AG04449 (cell line): ENCODE measurements at regions of chr1 and their contacts with region 1.

Region 1: GRCh38 chr1:224458996-224459395 is 24.4 kb upstream of the WDR26 start:
- DNase-seq: no peak
- H3K4me3 ChIP-seq: no peak overlapping the region
- CTCF ChIP-seq: no peak

Region 2: GRCh38 chr1:224113918-224114786 is 344.8 kb before region 1 on chr1 and contains the start of gene FBXO28:
- CTCF ChIA-PET with region 1: interaction called, 48 read pairs
- POLR2A ChIA-PET with region 1: no interaction called
- DNase-seq: peak; percentile 61
- H3K4me3 ChIP-seq: peak within 1 kb of the TSS; percentile 84
- CTCF ChIP-seq: no peak

Region 3: GRCh38 chr1:224383218-224383617 is 75.8 kb before region 1 on chr1:
- CTCF ChIA-PET with region 1: interaction called, 11 read pairs
- POLR2A ChIA-PET with region 1: no interaction called
- DNase-seq: no peak
- H3K4me3 ChIP-seq: no peak overlapping the region
- CTCF ChIP-seq: no peak

Region 4: DNA sequence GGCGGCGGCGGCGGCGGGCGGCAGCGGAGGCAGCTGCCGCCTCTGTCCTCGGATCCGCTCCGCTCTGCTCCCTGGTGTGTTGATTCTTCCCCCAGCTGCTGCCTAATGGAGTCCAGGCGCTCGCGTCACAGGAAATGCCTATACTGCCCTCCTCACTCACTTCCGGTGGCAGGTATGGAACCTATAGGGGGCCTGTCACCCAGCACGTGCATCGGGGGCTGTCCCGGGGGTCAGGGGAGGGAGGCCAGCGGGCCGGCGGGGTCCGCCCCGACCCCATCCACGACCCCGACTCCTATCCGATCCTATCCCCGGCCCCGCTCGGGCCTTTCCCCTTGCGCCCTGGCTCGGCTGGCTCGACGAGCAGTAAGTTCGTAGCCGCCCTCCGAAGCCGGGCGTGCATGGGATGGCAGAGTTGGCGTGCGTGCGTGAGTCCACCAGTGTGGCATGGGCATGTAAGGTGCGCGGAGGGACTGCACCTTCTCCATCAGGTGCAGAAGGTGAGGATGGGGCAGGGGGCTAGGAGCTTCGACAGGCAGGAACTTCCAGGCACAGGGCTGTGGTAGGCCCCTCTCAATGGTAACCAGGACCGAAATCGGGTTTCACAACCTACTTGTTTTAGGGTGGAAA is 24.2 kb before region 1 on chr1 and contains the start of gene WDR26:
- CTCF ChIA-PET with region 1: interaction called, 21 read pairs
- POLR2A ChIA-PET with region 1: interaction called, 5 read pairs
- DNase-seq: no peak
- H3K4me3 ChIP-seq: peak within 1 kb of the TSS; percentile 86
- CTCF ChIP-seq: peak; percentile 39

Region 5: GRCh38 chr1:224472806-224473205 is 13.8 kb after region 1 on chr1:
- CTCF ChIA-PET with region 1: interaction called, 31 read pairs
- POLR2A ChIA-PET with region 1: no interaction called
- DNase-seq: no peak
- H3K4me3 ChIP-seq: no peak overlapping the region
- CTCF ChIP-seq: no peak

Region 6: DNA sequence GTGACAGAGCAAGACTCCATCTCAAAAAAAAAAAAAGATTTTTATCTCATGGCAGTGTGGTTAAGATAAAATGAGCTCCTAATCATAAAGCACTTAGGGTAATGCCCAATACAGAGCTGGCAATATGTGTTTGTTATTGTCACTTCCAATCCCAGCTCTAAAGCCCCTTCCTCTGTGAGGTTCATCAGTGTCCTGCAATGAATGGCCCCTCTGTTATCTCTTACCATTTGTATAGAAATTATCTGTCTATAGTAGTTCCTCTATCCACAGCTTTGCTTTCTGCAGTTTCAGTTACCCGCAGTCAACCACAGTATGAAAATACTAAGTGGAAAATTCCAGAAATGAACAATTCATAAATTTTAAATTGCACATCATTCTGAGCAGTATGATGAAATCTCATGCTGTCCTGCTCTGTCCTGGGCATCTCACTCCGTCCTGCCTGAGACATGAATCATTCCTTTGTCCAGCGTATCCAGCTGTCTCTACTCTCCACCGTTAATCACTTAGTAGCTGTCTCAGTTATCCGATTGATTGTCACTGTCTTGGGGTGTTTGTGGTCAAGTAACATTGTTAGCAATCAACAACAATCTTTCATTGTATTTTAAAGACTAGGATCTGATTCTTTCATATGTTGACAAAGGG is 420.3 kb after region 1 on chr1:
- CTCF ChIA-PET with region 1: no interaction called
- POLR2A ChIA-PET with region 1: no interaction called
- DNase-seq: no peak
- H3K4me3 ChIP-seq: no peak overlapping the region
- CTCF ChIP-seq: no peak